SK-N-SH (cell line): ENCODE measurements at regions of chr17 and their contacts with region 1.

Region 1: DNA sequence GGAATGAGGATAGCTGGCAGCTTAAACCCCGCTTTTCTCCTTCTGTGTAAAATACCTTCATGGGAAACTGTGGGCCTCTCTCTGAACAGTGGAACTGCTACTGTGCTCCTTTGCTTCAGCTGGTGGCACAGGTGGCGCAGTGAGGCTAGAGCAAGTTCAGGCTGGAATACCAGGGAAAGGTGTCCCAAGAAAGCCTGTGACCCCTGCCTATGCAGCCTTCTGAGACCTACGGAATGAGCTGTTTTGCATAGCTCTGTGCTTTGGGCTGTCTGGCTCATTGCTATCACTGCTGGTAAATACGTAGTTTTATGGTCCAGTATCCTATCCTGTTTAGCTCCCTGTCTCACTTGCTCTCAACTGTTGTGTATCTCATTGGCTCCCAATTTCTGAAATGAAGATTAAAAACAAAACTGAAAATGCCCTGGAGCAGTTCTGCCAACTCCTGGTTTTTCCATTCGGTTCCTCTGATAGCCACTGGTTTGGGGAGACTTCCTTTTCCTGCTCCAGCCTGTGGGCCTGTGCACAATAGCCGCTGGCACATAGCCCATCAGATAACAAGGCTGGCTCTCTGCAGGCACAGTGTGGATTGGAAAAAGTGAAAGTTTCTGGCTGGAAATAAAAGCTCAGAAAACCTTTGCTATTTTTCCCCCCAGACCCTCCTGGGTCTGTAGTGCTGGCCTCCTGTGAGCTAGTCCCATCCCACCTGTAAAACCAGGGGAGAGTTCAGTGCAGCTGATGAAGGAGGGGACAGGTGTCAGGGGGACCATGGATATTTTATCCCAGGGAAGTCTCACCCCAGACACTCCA is 24.1 kb downstream of the LIMD2 start:
- DNase-seq: peak; percentile 85
- H3K4me3 ChIP-seq: peak overlapping the region in 1 of 2 experiments; percentile 45; a peak in 3 of 4 replicates
- H3K27ac ChIP-seq: peak overlapping the region; percentile 65 to 97
- H3K4me1 ChIP-seq: peaks cover 26 to 38% of the 10 kb centered on the region in 2 experiments
- H3K27me3 ChIP-seq: no peaks in the 10 kb centered on the region
- CTCF ChIP-seq: no peak
- EP300 ChIP-seq: peak; percentile 52 to 86; a peak in 3 of 4 replicates
- RAD21 ChIP-seq: peak; percentile 42

Region 2: DNA sequence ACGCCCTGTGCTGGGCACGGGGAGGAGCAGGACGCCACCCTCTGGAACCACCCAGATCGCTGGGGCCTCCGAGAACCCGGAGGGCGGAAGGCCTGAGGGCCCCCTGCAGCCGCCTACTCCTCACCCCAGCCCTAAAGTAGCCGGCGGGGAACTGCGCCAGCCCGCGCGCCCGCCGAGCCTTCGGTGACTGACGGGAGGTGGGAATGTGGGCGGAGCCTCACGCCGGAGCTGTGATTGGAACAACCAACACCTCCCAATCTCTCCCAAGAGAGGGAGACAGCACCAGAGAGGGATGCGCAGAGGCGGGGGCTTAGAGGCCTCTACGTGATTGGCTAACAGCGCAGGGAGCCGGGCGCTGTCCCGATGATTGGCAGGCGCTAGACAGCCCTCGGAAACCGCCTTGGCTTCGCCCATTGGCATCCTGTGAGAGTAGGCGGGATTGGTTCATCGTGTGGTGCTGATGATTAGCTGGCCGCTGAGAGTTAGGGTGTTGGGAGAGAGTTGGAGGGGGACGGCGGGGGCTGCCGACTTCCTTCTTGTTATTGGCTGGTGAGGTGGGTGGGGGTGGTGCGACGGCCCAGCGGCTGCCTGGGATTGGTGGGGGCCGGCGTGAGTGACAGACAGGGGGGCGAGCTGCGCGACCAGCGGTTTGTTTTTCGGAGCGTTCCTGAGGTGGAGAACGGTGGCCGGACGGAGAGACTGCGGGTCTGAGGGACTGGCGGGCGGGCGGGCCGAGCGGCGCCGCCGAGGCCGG is 53.9 kb before region 1 on chr17 and contains the start of gene MAP3K3:
- CTCF ChIA-PET with region 1: interaction called, 4 read pairs
- POLR2A ChIA-PET with region 1: interaction called, 10 read pairs
- DNase-seq: peak; percentile 99
- H3K4me3 ChIP-seq: peak within 1 kb of the TSS; percentile 79 to 87
- H3K27ac ChIP-seq: peak within 1 kb of the TSS; percentile 42 to 88; a peak in 3 of 4 replicates
- H3K4me1 ChIP-seq: peaks cover 13 to 14% of the 10 kb centered on the region in 2 experiments; a peak in 2 of 4 replicates
- H3K27me3 ChIP-seq: no peaks in the 10 kb centered on the region
- CTCF ChIP-seq: no peak; the same call in 1 of the 2 replicates
- EP300 ChIP-seq: peak in 1 of 2 experiments; percentile 29; a peak in 2 of 4 replicates
- RAD21 ChIP-seq: 0 out of 2 replicates have a peak, but pooled peaks have one; percentile 2
- polyA plus RNA-seq, gene MAP3K3: 25.3 and 26.5 TPM in 2 replicates

Region 3: GRCh38 chr17:63665527-63666214 is 10.1 kb before region 1 on chr17:
- CTCF ChIA-PET with region 1: interaction called, 13 read pairs
- POLR2A ChIA-PET with region 1: interaction called, 11 read pairs
- DNase-seq: no peak
- H3K4me3 ChIP-seq: no peak overlapping the region
- H3K27ac ChIP-seq: no peak overlapping the region
- H3K4me1 ChIP-seq: no peaks in the 10 kb centered on the region
- H3K27me3 ChIP-seq: no peaks in the 10 kb centered on the region
- CTCF ChIP-seq: no peak
- EP300 ChIP-seq: no peak
- RAD21 ChIP-seq: no peak

Region 4: DNA sequence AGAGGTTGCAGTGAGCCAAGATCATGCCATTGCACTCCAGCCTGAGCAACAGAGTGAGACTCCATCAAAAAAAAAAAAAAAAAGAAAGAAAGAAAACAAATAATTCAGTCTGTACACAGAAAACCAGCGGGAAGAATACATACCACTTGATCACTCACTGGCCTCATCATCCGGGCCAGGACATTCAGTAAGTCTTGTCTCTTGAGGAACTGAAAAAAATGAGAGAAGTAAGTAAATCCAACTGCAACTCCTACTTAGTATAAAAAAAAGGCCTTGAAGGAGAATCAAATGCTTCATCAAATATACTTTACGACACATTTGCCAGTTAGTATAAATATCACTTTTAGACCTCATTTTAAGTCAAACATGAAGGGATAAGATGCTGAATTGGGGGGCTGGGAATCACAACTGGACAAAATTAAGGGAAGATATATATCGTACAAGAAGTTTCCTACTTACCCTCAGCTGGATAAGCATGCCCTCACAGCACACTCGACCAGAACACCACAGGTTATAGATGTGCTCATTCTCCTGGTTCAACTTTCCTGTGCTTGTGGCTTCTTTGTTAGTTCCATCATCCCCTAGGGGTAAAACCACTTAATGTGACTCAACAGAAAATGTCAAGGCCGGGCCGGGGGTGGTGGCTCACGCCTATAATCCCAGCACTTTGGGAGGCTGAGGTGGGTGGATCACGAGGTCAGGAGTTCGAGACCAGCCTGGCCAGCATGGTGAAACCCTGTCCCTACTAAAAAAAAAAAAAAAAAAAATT is 85.1 kb after region 1 on chr17:
- CTCF ChIA-PET with region 1: no interaction called
- POLR2A ChIA-PET with region 1: no interaction called
- DNase-seq: no peak
- H3K4me3 ChIP-seq: no peak overlapping the region
- H3K27ac ChIP-seq: no peak overlapping the region
- H3K4me1 ChIP-seq: no peaks in the 10 kb centered on the region
- H3K27me3 ChIP-seq: no peaks in the 10 kb centered on the region
- CTCF ChIP-seq: no peak
- EP300 ChIP-seq: no peak
- RAD21 ChIP-seq: no peak